ENCODE measurements at regions of chr6 and their contacts with region 1.

Region 1: DNA sequence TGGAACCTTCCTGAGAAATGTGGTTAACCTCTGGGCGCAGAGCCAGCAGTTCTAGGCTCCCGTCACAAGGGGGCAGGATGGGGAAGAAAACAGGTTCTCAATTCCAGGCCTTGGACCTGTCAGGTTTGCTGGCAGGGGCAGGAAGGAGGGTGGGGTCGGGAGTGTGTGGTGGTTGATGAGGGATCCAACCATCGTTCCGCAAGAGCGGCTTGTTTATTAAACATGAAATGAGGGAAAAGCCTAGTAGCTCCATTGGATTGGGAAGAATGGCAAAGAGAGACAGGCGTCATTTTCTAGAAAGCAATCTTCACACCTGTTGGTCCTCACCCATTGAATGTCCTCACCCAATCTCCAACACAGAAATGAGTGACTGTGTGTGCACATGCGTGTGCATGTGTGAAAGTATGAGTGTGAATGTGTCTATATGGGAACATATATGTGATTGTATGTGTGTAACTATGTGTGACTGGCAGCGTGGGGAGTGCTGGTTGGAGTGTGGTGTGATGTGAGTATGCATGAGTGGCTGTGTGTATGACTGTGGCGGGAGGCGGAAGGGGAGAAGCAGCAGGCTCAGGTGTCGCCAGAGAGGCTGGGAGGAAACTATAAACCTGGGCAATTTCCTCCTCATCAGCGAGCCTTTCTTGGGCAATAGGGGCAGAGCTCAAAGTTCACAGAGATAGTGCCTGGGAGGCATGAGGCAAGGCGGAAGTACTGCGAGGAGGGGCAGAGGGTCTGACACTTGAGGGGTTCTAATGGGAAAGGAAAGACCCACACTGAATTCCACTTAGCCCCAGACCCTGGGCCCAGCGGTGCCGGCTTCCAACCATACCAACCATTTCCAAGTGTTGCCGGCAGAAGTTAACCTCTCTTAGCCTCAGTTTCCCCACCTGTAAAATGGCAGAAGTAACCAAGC is 29.6 kb downstream of the SRSF3 start:
- DNase-seq: peak; percentile 95

Region 2: GRCh38 chr6:36678518-36679027 is 54.8 kb after region 1 on chr6 and contains the start of gene CDKN1A:
- intact Hi-C with region 1: loop called (anchors 2 to 5 kb)
- DNase-seq: peak; percentile 97
- total RNA-seq, gene CDKN1A: 87.4 to 195 TPM

Region 3: DNA sequence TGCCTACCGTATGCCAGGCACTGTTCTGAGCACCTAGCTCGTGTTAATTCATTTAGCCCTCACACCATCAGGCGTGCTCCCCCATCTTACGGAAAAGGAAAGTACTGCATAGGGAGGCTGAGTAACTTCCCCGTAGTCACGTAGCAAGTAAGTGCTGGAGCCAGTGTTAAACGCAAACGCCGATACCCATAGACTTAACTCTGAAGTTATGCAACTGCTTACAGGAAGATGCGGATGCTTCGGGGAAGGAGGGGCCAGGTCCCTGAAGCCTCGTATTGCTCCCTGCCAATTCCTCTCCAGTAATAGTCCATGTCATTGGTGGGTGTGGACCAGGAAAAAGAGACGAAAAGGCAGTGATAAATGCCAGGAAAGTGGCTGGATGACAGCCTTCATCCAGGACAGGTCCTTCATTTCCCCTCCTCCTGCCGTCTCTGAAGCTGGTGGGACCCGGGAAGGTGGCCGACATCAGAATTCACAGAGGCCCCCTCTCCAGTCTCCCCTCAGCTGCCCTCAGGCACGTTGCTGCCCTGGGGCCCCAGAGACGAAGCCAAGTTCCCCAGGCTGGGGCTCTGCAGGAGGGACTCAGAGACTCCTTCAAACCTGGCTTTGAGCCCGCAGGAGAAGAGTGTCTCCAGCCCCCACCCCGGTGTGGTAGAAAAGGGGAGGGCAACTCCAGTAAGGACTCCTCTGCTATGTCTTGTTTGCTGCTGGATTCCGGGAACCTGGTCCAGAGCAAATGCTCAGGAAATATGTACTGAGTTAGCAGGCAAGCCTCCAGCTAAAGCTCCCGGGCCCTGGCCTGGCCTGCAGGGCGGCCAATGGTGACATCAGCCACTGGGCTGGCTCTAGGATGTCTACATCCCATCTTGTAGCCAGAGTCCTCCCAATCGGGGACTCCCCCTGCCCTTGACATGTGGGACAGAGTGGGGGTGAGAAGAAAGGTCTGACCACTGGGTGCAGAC is 111.6 kb after region 1 on chr6:
- intact Hi-C with region 1: loop called in 1 of 2 experiments (anchors 10 kb)
- DNase-seq: peak; percentile 95

Region 4: DNA sequence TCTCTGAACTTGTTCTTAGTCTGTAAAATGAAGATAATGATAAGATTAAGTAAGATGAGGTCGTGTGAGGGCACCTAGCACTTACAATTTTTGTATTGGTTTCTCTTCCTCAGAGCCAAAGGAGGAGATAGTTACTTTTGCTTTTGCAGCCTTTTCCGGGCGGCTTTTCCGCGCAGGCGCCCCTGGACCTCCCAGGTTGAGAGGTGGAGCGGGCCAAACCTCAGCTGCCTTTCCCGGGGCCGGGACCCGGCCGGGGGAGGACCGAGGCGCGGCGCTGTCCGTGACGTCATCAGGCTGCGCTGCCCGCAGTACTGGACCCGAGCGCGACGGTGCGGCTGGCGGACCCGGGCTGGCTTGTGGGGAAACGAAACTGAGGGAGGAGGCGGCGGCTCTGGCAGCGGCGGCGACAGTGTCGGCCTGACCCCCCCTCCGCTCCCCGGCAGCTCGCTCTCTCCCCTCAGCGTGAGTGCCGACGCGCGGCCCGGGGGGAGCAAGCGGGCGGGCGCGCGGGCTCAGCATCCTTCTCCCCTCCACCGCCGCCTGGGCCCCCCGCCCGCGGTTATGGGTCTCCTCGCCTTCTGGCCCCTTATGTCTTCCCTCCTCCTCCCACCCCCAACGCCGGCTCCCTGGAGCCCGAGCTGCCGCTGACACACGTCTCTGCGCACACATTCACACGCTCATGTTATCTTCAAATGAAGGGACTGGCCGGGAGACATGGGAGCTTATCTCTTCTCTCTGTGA is 809.3 kb after region 1 on chr6 and contains the start of gene CMTR1:
- intact Hi-C with region 1: no loop called
- DNase-seq: peak; percentile 99
- total RNA-seq, gene CMTR1: 24.0 to 27.9 TPM